Caco-2 (cell line): ENCODE measurements at regions of chr11 and their contacts with region 1.

Region 1: GRCh38 chr11:61947486-61948210 is 2.5 kb upstream of the BEST1 start:
- DNase-seq: peak; percentile 81 to 88
- H3K4me3 ChIP-seq: no peak overlapping the region
- H3K4me3 Mint-ChIP-seq: no peak overlapping the region
- H3K27ac Mint-ChIP-seq: no peak overlapping the region
- H3K4me1 ChIP-seq: peaks cover 12% of the 10 kb centered on the region
- H3K4me1 Mint-ChIP-seq: no peaks in the 10 kb centered on the region
- H3K27me3 ChIP-seq: no peaks in the 10 kb centered on the region
- H3K27me3 Mint-ChIP-seq: no peaks in the 10 kb centered on the region
- CTCF ChIP-seq: peak; percentile 88 to 98

Region 2: GRCh38 chr11:61141601-61142028 is 806.0 kb before region 1 on chr11:
- CTCF ChIA-PET with region 1: no interaction called
- POLR2A ChIA-PET with region 1: no interaction called
- intact Hi-C with region 1: no loop called
- DNase-seq: no peak
- H3K4me3 ChIP-seq: no peak overlapping the region
- H3K4me3 Mint-ChIP-seq: no peak overlapping the region
- H3K27ac Mint-ChIP-seq: no peak overlapping the region
- H3K4me1 ChIP-seq: no peaks in the 10 kb centered on the region
- H3K4me1 Mint-ChIP-seq: peaks cover 6% of the 10 kb centered on the region
- H3K27me3 ChIP-seq: no peaks in the 10 kb centered on the region
- H3K27me3 Mint-ChIP-seq: no peaks in the 10 kb centered on the region
- CTCF ChIP-seq: no peak

Region 3: GRCh38 chr11:61816736-61817455 is 130.8 kb before region 1 on chr11 and contains the start of gene FADS1:
- CTCF ChIA-PET with region 1: interaction called, 9 read pairs
- POLR2A ChIA-PET with region 1: interaction called, 10 read pairs
- intact Hi-C with region 1: loop called (anchors 5 kb)
- DNase-seq: peak; percentile 98 to 99
- H3K4me3 ChIP-seq: peak within 1 kb of the TSS; percentile 85
- H3K4me3 Mint-ChIP-seq: peak within 1 kb of the TSS; percentile 81
- H3K27ac Mint-ChIP-seq: peak within 1 kb of the TSS; percentile 90
- H3K4me1 ChIP-seq: peaks cover 16% of the 10 kb centered on the region
- H3K4me1 Mint-ChIP-seq: peaks cover 18% of the 10 kb centered on the region
- H3K27me3 ChIP-seq: no peaks in the 10 kb centered on the region
- H3K27me3 Mint-ChIP-seq: no peaks in the 10 kb centered on the region
- CTCF ChIP-seq: peak; percentile 72 to 95
- total RNA-seq, gene FADS1: 108 and 116 TPM in 2 replicates

Region 4: GRCh38 chr11:61899146-61899841 is 48.4 kb before region 1 on chr11:
- CTCF ChIA-PET with region 1: interaction called, 274 read pairs
- POLR2A ChIA-PET with region 1: interaction called, 4 read pairs
- intact Hi-C with region 1: loop called (anchors 1 kb)
- DNase-seq: peak; percentile 89 to 96
- H3K4me3 ChIP-seq: no peak overlapping the region
- H3K4me3 Mint-ChIP-seq: no peak overlapping the region
- H3K27ac Mint-ChIP-seq: no peak overlapping the region
- H3K4me1 ChIP-seq: no peaks in the 10 kb centered on the region
- H3K4me1 Mint-ChIP-seq: no peaks in the 10 kb centered on the region
- H3K27me3 ChIP-seq: no peaks in the 10 kb centered on the region
- H3K27me3 Mint-ChIP-seq: no peaks in the 10 kb centered on the region
- CTCF ChIP-seq: peak; percentile 100

Region 5: GRCh38 chr11:61967116-61967923 is 19.7 kb after region 1 on chr11 and contains the start of gene FTH1:
- CTCF ChIA-PET with region 1: interaction called, 10 read pairs
- POLR2A ChIA-PET with region 1: interaction called, 36 read pairs
- intact Hi-C with region 1: no loop called
- DNase-seq: peak; percentile 92 to 96
- H3K4me3 ChIP-seq: peak within 1 kb of the TSS; percentile 92
- H3K4me3 Mint-ChIP-seq: peak within 1 kb of the TSS; percentile 81
- H3K27ac Mint-ChIP-seq: peak within 1 kb of the TSS; percentile 93
- H3K4me1 ChIP-seq: peaks cover 35% of the 10 kb centered on the region
- H3K4me1 Mint-ChIP-seq: peaks cover 39% of the 10 kb centered on the region
- H3K27me3 ChIP-seq: no peaks in the 10 kb centered on the region
- H3K27me3 Mint-ChIP-seq: no peaks in the 10 kb centered on the region
- CTCF ChIP-seq: no peak
- total RNA-seq, gene FTH1: 1,282 and 1,565 TPM in 2 replicates

Region 6: GRCh38 chr11:62054484-62055121 is 107.0 kb after region 1 on chr11:
- CTCF ChIA-PET with region 1: interaction called, 7 read pairs
- POLR2A ChIA-PET with region 1: no interaction called
- intact Hi-C with region 1: loop called (anchors 1 kb)
- DNase-seq: peak; percentile 83 to 85
- H3K4me3 ChIP-seq: no peak overlapping the region
- H3K4me3 Mint-ChIP-seq: peak overlapping the region; percentile 25
- H3K27ac Mint-ChIP-seq: peak overlapping the region; percentile 81
- H3K4me1 ChIP-seq: 0 out of 2 replicates have a peak, but pooled peaks cover 5% of the 10 kb centered on the region
- H3K4me1 Mint-ChIP-seq: no peaks in the 10 kb centered on the region
- H3K27me3 ChIP-seq: no peaks in the 10 kb centered on the region; the same call in 1 of the 2 replicates
- H3K27me3 Mint-ChIP-seq: no peaks in the 10 kb centered on the region
- CTCF ChIP-seq: peak; percentile 78 to 93